Heart right ventricle (tissue), 16 donors: ENCODE measurements at regions of chr1 and their contacts with region 1.

Region 1: GRCh38 chr1:57381871-57382270 is 42.0 kb downstream of the DAB1 start:
- DNase-seq: no peak
- ATAC-seq: no peak
- H3K4me3 ChIP-seq: no peak overlapping the region
- H3K27ac ChIP-seq: no peak overlapping the region
- H3K4me1 ChIP-seq: peaks cover 0 to 7% (median 0%) of the 10 kb centered on the region in 9 donors
- H3K27me3 ChIP-seq: peaks cover 0 to 6% (median 0%) of the 10 kb centered on the region in 7 donors
- CTCF ChIP-seq: no peak

Region 2: GRCh38 chr1:57300186-57300585 is 81.7 kb before region 1 on chr1:
- intact Hi-C with region 1: no loop called
- DNase-seq: no peak
- ATAC-seq: no peak
- H3K4me3 ChIP-seq: no peak overlapping the region
- H3K27ac ChIP-seq: no peak overlapping the region
- H3K4me1 ChIP-seq: peaks cover 0 to 23% (median 0%) of the 10 kb centered on the region in 9 donors
- H3K27me3 ChIP-seq: no peaks in the 10 kb centered on the region
- CTCF ChIP-seq: no peak

Region 3: DNA sequence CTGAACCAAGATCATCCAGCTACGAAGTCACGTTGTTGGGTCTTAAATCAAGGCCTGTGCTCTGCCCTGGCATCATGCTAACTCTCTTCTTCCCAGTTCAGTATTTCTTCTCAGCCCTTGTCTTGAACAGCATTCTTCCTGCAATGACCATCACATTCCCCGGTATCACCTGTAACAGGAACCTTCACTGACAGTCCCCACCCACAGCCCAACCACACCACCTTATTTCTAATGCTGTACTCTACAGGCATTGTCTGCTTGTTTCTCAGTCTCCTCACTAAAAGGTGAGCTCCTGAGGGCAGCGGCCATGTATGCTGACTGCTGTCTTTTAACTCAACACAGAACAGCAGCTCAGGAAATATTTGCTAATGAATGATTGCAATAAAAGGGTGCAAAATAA is 12.0 kb before region 1 on chr1:
- intact Hi-C with region 1: loop called in 1 of 10 experiments (anchors 1 kb)
- DNase-seq: no peak
- ATAC-seq: no peak
- H3K4me3 ChIP-seq: no peak overlapping the region
- H3K27ac ChIP-seq: no peak overlapping the region
- H3K4me1 ChIP-seq: no peaks in the 10 kb centered on the region
- H3K27me3 ChIP-seq: no peaks in the 10 kb centered on the region
- CTCF ChIP-seq: no peak